Posterior vena cava (tissue), 2 donors: ENCODE measurements at regions of chr6 and their contacts with region 1.

Region 1: GRCh38 chr6:71510057-71510713 is 221.6 kb downstream of the OGFRL1 start:
- DNase-seq: peak; percentile 79

Region 2: DNA sequence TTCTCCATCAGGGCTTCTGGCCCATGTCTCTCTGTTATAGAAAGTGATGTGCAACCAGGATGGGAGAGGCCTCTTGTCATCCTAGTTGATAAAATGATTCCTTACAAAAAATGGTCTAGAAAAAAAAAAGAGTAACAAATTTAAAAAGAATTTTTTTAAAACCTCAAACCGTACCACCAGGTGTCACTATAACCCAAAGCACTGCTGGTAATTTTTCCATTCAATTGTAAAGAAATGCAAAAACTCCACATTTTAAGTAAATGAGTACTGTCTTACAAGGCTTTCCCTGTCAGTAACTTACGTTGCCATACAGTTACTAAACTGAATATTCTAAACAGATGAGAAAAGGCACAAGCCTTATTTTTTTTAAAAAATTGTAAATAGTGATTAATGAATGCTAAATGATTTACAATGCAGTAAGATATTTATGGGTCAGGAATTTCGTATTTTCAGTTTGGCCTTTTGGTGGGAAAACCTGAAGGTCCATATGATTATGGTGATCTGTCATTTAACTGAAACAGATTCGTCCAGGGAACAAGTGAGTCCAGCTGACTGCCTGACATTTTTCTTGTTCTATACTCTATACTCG is 126.2 kb before region 1 on chr6:
- intact Hi-C with region 1: loop called (anchors 2 to 10 kb)
- DNase-seq: no peak